ENCODE measurements at regions of chr10 and their contacts with region 1.

Region 1: DNA sequence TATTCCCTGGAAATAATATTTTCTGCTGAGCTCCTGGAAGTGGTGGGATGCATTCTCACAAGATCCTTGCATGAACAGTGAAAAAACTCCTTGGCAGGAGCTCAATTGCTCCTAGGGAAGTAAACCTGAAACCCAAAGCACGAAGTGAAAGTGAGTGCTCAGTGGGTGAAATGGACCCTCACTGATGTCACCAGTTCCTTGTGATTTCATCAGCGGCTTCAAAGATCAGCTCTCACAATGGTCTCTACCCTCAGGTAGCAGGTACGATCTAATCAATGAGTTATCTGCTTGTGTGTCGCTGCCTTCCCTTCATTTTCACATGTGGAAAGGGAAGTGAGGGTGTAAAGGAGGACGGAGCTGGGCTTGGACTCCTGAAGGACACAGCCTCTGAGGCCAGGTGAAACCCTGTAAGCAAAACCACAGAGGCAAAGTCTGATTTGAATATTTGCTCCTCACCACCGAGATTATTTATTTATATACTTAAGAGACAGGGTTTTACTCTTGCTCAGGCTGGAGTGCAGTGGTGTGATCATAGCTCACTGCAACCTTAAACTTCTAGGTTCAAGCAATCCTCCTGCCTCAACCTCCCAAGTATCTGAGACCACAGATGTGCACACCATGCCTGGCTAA is 255.4 kb upstream of the LYZL1 start:
- DNase-seq: no peak

Region 2: DNA sequence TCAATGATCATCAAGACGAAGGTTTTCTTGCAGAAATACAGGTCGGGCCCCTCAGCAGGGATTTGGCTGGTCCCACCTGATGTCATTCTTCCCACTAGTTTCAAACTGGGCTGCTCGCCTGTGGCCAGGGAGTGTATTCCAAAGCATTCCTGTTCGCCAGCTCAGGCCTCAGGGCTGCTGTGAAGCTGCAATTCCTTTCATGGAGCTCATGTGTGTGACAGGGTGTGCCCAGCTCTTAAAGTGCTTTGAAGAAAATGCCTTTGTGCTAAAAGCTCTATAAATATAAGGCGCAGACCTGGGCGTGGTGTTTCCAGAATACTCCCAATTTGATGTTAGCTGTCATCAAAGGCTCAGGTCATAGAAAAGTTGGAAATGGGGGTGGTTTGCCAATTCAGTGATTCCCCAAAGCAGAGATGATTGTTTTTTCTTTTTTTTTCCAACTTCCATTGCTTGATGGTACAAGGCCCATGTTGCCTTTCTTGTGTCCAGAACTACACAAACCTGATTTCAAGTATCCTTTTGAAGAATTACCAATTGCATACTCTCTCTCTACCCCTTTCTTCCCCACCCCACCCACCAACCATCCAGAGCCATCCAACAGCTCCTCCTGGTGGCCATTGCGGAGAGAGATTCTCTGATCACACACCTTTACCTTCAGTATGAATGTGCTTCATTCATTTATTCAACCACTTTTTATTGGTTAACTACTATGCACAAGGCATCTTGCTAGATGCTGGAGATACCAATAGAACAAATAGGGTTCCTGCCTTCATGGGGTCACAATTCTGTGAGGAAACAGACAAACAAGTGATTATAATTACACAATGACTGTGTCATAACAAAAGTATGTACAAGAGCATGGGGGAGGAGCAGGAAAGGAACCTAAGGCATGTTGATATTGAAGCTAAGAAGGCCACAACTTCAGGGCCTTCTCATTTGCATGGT is 41.8 kb before region 1 on chr10:
- CTCF ChIA-PET with region 1: interaction called, 11 read pairs
- POLR2A ChIA-PET with region 1: no interaction called
- DNase-seq: peak; percentile 53

Measured in HEK293T (cell line).